Head of caudate nucleus (tissue), 42 donors: ENCODE measurements at regions of chr1 and their contacts with region 1.

Region 1: DNA sequence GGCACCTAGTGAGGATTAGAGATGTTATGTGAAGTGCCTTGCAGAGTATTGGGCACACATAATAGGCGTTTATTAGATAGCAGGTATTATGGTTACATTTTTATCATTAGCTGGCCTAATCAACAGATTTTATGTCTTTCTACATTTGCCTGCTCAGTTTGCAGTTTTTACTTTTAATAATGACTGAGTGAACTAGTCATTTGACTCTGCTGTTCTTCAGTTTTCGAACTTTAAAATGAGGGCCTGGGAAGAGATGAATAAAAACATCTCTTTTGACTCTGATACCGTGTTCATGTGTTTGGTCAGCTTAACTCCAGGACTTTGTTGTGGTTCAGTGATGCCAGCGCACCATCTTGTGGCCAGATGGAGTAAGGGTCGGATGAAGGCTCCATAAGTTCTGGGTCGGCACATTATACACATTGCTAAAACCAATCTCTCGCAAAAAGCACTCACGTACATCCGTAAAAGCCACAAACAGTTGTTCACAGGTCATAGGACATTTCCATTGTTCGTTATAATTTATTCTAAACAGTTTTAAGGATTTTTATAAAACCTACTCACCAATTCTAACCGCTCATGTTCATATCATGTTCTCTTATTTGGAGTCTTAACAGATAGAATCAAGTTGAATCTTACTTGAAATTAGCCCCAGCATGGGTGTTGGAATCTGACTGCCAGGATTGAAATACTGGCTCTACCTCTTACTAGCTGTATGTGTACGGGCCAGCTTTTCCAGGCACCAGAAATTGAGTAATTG is 78.4 kb upstream of the GPR88 start:
- DNase-seq: peak; percentile 45 to 88 (median 74)

Region 2: DNA sequence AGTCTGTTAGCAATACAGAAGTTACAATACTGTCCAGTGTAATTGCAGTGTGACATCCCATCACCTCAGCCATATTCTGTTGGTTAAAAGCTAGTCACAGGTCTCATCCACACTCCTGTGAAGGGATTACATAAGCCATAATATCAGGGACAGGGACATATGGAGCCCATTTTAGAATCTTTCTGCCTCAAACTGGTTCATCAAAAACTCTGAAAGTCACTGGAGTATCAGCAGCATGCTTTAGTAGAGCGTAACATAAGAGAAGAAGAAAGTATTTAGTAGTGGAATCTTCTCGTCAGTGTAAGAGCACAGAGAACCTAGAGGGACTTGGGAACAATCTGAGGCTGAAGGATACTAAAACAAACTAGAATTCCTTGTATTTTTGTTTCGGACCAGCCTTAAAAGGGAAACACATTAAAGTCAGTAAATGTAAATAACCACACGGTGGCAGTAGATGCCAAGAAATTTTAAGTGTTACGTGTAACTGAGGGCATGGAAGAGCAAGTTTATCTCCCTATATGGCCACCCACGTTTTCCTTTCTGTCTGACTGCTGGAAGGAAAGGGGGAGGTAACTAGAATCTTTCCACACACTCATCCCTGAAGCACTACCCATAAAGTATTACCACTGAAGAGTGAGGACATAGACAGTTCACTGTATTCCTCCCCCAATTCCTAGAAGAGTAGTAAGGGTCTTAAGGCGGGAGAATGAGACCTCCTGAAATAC is 651.0 kb before region 1 on chr1:
- intact Hi-C with region 1: loop called (anchors 5 kb)
- DNase-seq: peak in 22 of 42 donors; percentile 8 to 81 (median 34)

Region 3: GRCh38 chr1:100360790-100361510 is 98.6 kb before region 1 on chr1:
- intact Hi-C with region 1: loop called (anchors 10 kb)
- DNase-seq: peak in 14 of 42 donors; percentile 8 to 62 (median 26)

Region 4: DNA sequence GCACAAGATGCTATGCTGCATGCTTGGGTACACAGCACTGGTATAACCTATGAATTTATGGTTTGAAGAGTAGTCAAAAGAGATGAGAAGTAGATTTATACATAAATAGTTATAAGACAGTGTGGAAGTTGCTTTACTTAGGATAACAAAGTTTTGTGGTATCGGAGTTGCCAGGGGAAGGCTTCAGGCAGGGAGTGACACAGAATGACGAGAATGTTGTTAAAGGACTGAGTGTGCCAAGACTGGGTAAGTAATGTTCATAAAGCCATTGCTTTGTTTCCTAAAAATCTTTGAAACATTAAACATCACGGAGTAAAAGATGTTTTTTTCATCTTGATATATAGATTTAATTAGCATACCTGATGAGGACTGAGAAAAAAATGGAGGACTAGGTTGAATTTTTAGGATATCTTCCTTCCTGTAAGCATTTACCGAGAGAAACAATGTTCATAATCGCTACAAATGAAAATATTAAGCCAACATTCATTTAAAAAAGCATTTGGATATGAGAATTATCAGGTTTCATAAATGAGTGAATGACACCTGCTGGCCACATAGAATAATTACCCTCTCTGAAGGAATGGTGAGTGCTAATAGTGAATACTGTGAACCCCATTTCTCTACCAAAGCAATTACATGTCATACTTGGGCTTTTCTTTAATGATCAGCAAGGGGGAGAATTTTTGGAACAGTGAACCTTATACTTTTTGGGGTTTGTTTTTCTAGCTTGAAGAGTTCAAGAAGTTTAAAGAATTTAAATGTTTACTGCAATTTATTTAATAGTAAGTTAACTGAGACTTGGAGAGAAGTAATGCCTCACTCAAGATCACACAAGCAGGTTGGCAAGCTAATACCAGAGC is 406.7 kb after region 1 on chr1:
- intact Hi-C with region 1: loop called (anchors 5 kb)
- DNase-seq: peak in 2 of 42 donors; percentile 19 to 27

Region 5: GRCh38 chr1:101071470-101071891 is 611.9 kb after region 1 on chr1:
- intact Hi-C with region 1: no loop called
- DNase-seq: no peak